ENCODE measurements at regions of chr1 and their contacts with region 1.

Region 1: GRCh38 chr1:101371259-101371658 is 134.4 kb downstream of the S1PR1 start:
- DNase-seq: peak; percentile 17
- H3K4me3 Mint-ChIP-seq: no peak overlapping the region
- H3K27ac Mint-ChIP-seq: no peak overlapping the region
- H3K4me1 Mint-ChIP-seq: peaks cover 11% of the 10 kb centered on the region
- H3K27me3 Mint-ChIP-seq: no peaks in the 10 kb centered on the region

Region 2: DNA sequence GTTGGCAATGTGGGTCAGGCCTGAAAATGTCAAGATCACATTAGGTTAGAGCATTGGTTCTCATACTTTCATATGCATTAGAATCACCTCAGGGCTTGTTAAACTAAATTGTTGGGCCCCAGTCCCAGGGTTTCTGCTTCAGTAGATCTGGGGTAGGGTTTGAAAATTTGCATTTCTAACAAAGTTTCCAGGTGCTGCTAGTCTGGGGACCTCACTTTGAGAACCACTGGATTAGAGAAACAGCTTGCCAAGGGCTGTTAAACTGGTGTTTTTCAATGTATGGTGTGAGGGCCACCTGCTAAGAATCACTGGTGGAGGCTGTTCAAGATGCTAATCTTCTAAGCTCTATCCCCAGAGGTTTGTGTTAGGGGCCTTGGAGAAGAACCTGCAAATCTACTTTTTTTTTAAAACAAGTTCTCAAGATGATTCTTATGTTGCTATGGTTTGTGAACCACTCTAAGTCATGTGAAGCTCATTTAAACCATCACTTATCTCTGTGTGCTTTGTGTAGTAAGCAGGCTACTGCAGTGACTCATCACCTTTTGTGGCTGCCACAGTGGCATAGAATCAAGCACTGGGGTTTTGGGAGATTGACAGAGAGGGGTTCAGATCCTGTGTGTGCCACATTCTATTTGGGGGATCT is 17.8 kb after region 1 on chr1:
- CTCF ChIA-PET with region 1: no interaction called
- POLR2A ChIA-PET with region 1: interaction called, 3 read pairs
- intact Hi-C with region 1: loop called (anchors 1 kb)
- DNase-seq: peak; percentile 56
- H3K4me3 Mint-ChIP-seq: no peak overlapping the region
- H3K27ac Mint-ChIP-seq: peak overlapping the region; percentile 46
- H3K4me1 Mint-ChIP-seq: peaks cover 7% of the 10 kb centered on the region
- H3K27me3 Mint-ChIP-seq: no peaks in the 10 kb centered on the region